ENCODE measurements at regions of chr10 and their contacts with region 1.

Region 1: DNA sequence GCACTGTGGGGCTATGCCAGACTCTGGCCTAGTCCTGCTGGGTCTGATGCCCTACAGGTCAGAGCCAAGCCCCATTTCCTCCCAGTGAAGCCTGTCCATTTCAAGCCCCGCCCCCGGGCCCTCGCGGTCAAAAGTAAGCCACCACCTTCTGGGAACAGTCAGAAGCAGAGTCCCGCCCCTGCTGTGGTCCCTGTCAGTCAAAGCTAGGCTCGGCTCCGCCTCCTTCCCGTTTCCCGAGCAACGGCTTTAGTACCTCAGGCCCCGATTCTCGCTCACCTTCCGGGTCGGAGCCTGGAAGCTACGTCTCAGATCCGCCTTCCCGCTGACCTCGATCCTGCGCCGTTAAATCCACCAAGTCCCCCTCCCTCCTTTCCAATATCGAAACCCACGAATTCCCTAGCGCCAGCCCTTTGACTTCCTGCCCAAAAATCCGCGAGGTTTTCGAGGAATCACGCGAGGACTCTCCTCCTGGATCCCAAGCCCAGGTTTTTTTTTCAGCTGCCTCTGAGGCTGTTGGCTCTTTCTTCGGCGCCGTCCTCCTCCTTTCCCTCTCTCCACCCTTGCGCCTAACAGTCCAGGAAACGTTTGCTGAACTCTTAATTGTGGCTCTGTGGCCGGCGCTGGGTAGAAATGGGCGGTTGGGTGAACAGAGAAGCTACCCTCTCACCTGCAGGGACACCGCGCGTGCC is 11.8 kb downstream of the SFXN3 start:
- DNase-seq: peak; percentile 98
- H3K4me3 ChIP-seq: peak overlapping the region; percentile 40
- H3K4me3 Mint-ChIP-seq: peak overlapping the region; percentile 92
- H3K27ac Mint-ChIP-seq: peak overlapping the region; percentile 99
- H3K4me1 ChIP-seq: peaks cover 24% of the 10 kb centered on the region
- H3K4me1 Mint-ChIP-seq: peaks cover 14% of the 10 kb centered on the region
- H3K27me3 ChIP-seq: no peaks in the 10 kb centered on the region
- H3K27me3 Mint-ChIP-seq: no peaks in the 10 kb centered on the region
- CTCF ChIP-seq: no peak

Region 2: GRCh38 chr10:101018600-101019439 is 24.0 kb before region 1 on chr10:
- CTCF ChIA-PET with region 1: interaction called, 8 read pairs
- POLR2A ChIA-PET with region 1: no interaction called
- intact Hi-C with region 1: loop called (anchors 2 kb)
- DNase-seq: peak; percentile 87 to 90
- H3K4me3 ChIP-seq: no peak overlapping the region
- H3K4me3 Mint-ChIP-seq: no peak overlapping the region
- H3K27ac Mint-ChIP-seq: no peak overlapping the region
- H3K4me1 ChIP-seq: peaks cover 11% of the 10 kb centered on the region; the same call in 1 of the 2 replicates
- H3K4me1 Mint-ChIP-seq: peaks cover 12% of the 10 kb centered on the region
- H3K27me3 ChIP-seq: no peaks in the 10 kb centered on the region
- H3K27me3 Mint-ChIP-seq: no peaks in the 10 kb centered on the region
- CTCF ChIP-seq: peak; percentile 60 to 85

Region 3: DNA sequence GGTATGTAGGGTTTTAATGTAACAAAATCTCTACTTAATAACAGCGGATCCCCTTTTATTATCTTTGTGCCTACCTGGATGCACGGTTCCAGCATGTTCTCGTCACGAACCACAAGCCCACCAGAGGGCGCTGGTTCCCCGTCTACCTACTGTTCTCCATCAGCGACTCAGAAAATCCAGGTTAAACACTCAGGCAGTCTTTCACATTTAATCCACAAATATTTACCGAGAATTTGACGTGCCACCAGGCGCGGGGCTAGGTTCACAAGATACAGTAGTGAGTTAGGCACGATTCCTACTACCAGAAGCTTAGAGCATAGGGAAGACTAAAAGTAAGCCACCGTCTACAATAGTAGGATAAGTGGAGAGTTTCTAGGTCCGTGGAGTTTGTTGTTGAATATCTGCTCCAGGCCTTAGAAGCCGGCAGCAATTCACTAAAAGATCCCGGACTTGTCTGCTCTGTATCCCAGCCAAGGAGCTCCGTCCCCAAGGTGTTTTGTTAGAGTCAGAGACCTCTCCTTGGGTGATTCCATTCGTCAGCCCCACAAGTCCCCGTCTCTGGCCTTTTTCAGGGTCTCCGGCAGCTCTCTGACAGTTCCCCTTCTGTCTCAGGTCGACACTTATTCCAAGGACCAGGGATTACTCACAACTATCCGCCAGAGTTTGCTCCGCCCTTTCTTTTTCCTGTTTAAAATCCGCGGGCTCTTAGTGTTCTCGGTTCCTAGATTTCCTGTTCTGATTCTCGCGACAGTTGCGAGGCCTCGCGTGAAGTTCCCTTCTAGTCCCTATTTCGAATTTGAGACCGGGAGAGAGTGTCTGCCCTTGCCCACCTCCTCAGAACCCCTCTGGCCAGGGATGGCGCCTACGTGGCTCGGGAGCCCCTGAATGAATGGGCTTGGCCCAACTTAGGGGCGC is 17.5 kb after region 1 on chr10:
- CTCF ChIA-PET with region 1: interaction called, 47 read pairs
- POLR2A ChIA-PET with region 1: interaction called, 24 read pairs
- intact Hi-C with region 1: loop called (anchors 1 kb)
- DNase-seq: peak; percentile 91 to 94
- H3K4me3 ChIP-seq: peak overlapping the region; percentile 76
- H3K4me3 Mint-ChIP-seq: peak overlapping the region; percentile 98
- H3K27ac Mint-ChIP-seq: peak overlapping the region; percentile 99
- H3K4me1 ChIP-seq: peaks cover 32% of the 10 kb centered on the region
- H3K4me1 Mint-ChIP-seq: peaks cover 22% of the 10 kb centered on the region
- H3K27me3 ChIP-seq: no peaks in the 10 kb centered on the region
- H3K27me3 Mint-ChIP-seq: no peaks in the 10 kb centered on the region
- CTCF ChIP-seq: peak; percentile 89 to 90

Region 4: DNA sequence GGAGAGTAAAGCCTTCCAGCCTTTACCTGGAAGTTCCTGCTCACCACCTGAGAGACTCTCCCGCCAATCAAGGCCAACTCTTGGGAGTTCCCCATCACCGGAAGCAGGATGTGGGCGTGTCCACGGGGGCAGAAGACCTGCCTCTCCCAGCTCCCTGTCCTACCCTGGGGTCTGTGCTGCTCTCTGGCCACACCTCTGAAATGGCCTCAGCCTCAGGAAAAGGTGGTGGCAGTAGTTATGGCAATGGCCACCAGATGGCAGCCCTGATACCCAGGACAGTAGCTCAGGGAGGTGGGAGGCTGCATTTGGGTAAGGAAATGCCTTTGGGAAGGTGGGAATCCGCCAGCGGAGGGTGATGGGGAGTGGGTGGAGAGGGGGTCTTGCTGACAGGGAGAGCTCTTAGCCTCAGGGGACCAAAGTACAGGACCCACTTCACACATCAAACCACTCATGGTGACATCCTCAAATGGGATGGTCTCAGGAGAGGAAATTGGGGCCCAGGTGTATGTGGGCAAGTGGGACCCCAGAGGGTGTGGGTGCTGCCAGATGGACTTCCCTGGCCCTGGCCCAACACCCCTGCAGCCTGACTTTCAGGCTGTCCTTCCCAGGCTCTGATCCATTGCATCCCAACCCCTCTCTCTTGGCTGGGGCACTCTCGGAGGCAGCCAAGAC is 52.9 kb after region 1 on chr10:
- CTCF ChIA-PET with region 1: interaction called, 16 read pairs
- POLR2A ChIA-PET with region 1: interaction called, 4 read pairs
- intact Hi-C with region 1: loop called (anchors 1 kb)
- DNase-seq: peak; percentile 95 to 97
- H3K4me3 ChIP-seq: no peak overlapping the region
- H3K4me3 Mint-ChIP-seq: no peak overlapping the region
- H3K27ac Mint-ChIP-seq: no peak overlapping the region
- H3K4me1 ChIP-seq: peaks cover 35% of the 10 kb centered on the region
- H3K4me1 Mint-ChIP-seq: peaks cover 32% of the 10 kb centered on the region
- H3K27me3 ChIP-seq: no peaks in the 10 kb centered on the region
- H3K27me3 Mint-ChIP-seq: no peaks in the 10 kb centered on the region
- CTCF ChIP-seq: peak; percentile 88 to 90

Region 5: DNA sequence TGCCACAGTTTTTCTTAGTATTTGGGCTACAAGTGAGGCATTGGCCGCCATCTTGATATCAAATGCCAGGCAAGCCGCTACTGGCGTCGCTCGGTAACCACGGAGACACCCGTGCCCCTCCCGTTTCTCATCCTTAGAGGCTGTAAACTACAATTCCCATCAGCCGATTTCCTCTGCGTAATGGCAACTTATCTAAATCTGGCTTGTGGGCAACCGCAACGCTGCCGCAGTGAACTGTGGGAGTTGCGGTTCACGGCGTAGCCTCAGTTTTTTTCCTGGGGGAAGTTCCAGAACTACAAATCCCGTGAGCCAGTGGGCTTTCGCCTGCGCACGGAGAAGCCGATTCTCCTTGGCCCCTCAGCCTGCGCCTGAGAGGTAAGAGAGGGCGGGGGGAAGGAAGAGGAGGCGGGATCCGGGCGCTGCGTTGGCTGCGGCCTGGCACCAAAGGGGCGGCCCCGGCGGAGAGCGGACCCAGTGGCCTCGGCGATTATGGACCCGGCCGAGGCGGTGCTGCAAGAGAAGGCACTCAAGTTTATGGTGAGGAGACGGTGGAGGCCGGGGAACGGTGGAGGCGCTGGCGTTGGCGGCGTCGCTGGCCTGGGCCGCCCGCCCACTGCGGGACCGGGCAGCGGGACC is 311.0 kb after region 1 on chr10 and contains the start of gene BTRC:
- CTCF ChIA-PET with region 1: interaction called, 13 read pairs
- POLR2A ChIA-PET with region 1: no interaction called
- intact Hi-C with region 1: no loop called
- DNase-seq: peak; percentile 97
- H3K4me3 ChIP-seq: peak within 1 kb of the TSS; percentile 58
- H3K4me3 Mint-ChIP-seq: peak within 1 kb of the TSS; percentile 91
- H3K27ac Mint-ChIP-seq: peak within 1 kb of the TSS; percentile 82
- H3K4me1 ChIP-seq: peaks cover 8% of the 10 kb centered on the region; the same call in 1 of the 2 replicates
- H3K4me1 Mint-ChIP-seq: peaks cover 8% of the 10 kb centered on the region
- H3K27me3 ChIP-seq: no peaks in the 10 kb centered on the region
- H3K27me3 Mint-ChIP-seq: peaks cover 15% of the 10 kb centered on the region
- CTCF ChIP-seq: no peak
- total RNA-seq, gene BTRC: 19.6 and 20.0 TPM in 2 replicates

Measured in Caco-2 (cell line).